CD4-positive, alpha-beta memory T cell (primary cell): ENCODE measurements at regions of chr12 and their contacts with region 1.

Region 1: DNA sequence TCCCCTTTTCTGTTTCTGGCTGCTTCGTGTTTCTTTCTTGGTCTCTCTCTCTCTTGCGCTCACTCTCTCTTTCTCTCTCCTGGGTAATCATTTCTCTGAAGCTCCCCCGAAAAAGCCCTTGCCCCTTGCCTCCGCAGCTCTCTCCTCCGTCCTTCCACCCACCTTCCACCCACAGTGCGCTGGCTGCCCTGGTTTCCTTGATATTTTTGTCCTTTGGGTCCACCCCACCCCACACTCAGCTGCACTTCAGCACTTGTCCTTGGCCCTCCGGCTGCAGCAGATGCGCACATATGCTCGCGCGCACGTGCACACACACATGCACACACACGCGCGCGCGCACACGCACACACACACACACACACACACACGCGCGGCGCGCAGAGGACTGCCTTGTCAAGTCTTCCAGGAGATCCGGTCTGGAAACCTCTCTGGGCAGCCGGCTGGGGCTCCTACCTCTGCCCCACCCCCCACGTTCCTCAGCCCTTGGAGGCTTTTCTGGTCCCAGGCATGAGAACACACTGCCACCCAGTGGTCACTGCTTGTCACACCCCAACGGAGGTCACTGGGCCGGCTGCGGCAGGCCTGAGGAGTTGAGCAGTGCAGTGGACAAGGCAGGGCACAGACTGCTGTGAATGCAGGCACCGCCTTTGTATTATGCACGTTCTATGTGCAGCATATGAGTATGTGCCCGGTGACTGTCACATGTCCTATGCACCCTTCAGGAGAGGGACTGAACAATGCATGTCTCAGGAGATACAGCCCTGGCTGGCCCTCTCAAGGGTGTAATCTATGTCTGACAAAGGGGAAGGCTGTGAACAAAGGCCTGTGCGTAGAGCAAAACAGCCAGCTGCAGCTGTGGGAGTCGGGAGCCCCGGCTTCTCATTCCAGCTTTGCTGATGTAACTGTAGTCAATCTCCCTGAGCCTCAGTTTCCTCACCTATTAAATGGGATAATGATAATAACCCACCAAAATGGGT is 6.5 kb downstream of the LAG3 start:
- DNase-seq: peak; percentile 84 to 90 (median 84)
- H3K4me3 ChIP-seq: peak overlapping the region in 1 of 2 donors; percentile 58
- H3K4me3 Mint-ChIP-seq: peak overlapping the region; percentile 67 to 97 (median 86)
- H3K27ac ChIP-seq: peak overlapping the region; percentile 6
- H3K27ac Mint-ChIP-seq: peak overlapping the region; percentile 49 to 98 (median 90)
- H3K4me1 ChIP-seq: peaks cover 28% of the 10 kb centered on the region
- H3K4me1 Mint-ChIP-seq: peaks cover 22 to 66% (median 45%) of the 10 kb centered on the region in 4 donors
- H3K27me3 ChIP-seq: peaks cover 6% of the 10 kb centered on the region
- H3K27me3 Mint-ChIP-seq: peaks cover 6 to 21% of the 10 kb centered on the region in 2 donors

Region 2: DNA sequence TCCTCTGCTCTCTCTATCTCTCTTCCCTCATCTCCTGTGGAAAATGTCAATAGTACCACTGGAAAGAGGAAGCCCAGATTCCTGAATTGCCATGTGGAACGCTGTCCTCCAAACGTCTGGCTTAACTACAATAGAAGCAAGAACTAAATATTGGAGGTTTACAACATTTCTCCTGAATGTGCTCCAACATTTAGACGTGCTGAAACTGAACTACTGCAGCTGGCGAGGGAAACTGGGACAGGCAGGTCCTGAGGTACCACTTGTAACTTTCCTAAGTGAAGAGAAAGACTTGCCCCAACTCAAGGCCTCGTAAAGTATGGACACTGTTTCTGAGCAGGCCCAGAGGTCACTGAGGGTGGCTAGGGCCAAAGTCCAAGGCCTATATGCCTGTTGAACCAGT is 1159.2 kb before region 1 on chr12:
- CTCF ChIA-PET with region 1: no interaction called
- POLR2A ChIA-PET with region 1: no interaction called
- intact Hi-C with region 1: no loop called
- DNase-seq: no peak
- H3K4me3 ChIP-seq: no peak overlapping the region
- H3K4me3 Mint-ChIP-seq: no peak overlapping the region
- H3K27ac ChIP-seq: no peak overlapping the region
- H3K27ac Mint-ChIP-seq: no peak overlapping the region
- H3K4me1 ChIP-seq: no peaks in the 10 kb centered on the region
- H3K4me1 Mint-ChIP-seq: no peaks in the 10 kb centered on the region
- H3K27me3 ChIP-seq: no peaks in the 10 kb centered on the region
- H3K27me3 Mint-ChIP-seq: peaks cover 2 to 7% of the 10 kb centered on the region in 2 donors

Region 3: DNA sequence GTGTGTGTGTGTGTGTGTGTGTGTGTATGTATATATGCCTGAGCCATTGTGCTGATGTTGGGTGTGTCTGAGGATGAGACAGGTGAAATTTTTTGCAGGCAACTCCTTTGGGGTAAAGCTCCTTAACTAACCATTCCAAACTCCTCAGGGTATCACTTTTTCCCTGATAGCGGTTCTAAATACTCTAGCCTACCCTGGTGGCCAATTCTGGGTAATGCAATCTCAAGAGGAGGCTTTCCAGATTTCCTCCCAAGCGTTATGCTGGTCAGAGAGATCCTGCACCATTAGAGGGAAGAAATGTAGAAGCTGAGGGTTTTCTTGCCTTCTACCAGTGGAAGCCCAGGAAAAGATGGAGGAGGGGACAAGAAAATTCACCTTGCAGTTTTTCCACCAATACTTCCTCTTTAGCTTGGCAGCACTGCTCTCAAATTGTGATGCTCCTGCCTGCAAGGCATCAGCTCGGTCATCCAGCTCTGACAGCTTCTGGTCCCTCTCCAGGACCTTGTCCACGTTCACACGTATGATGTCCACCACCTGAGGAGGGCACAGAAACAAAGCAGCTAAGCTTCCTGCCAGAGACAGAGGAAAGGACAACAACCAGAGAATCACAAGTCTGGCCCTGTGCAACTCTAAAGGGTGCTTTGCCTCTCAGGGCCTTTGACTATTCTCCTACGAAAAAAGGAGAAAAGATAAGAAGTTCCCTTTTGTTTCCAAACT is 313.2 kb before region 1 on chr12:
- CTCF ChIA-PET with region 1: no interaction called
- POLR2A ChIA-PET with region 1: no interaction called
- intact Hi-C with region 1: no loop called
- DNase-seq: peak; percentile 56 to 67 (median 59)
- H3K4me3 ChIP-seq: no peak overlapping the region
- H3K4me3 Mint-ChIP-seq: peak overlapping the region; percentile 26 to 79 (median 66)
- H3K27ac ChIP-seq: peak overlapping the region; percentile 10
- H3K27ac Mint-ChIP-seq: peak overlapping the region; percentile 90 to 97 (median 95)
- H3K4me1 ChIP-seq: peaks cover 88% of the 10 kb centered on the region
- H3K4me1 Mint-ChIP-seq: peaks cover 74 to 92% (median 87%) of the 10 kb centered on the region in 4 donors
- H3K27me3 ChIP-seq: no peaks in the 10 kb centered on the region
- H3K27me3 Mint-ChIP-seq: no peaks in the 10 kb centered on the region

Region 4: DNA sequence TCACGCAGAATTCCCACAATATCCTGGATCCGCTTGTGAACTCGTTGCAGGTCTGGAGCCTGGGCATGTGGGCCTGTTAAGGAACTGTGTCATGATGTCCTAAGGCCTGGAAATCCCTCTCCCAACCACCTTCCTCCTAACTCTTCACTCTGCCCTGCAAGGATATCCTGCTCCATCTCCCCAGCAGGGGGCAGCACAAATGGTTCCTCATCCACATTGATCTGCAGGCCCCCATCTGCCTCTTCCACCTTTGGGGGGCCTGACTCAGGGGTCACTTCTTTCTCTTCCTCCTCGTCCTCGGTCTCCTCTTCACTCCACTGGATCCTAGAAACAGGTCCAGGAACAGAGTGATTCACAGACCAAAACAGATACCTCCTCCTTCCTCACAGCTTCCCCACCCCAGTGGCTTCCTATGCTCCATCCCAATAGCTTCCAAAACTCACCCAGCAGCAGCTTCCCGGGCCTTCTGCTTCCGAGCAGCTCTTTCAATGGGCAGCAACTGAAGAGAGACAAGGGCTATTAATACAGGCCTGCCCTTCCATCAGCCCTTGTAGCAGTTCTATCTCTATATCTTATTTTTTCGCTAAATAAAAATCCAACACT is 215.3 kb before region 1 on chr12:
- CTCF ChIA-PET with region 1: interaction called, 4 read pairs
- POLR2A ChIA-PET with region 1: interaction called, 3 read pairs
- intact Hi-C with region 1: loop called (anchors 2 kb)
- DNase-seq: peak; percentile 55 to 62 (median 58)
- H3K4me3 ChIP-seq: no peak overlapping the region
- H3K4me3 Mint-ChIP-seq: peak overlapping the region in 1 of 8 donors; percentile 57
- H3K27ac ChIP-seq: no peak overlapping the region
- H3K27ac Mint-ChIP-seq: peak overlapping the region in 6 of 7 donors; percentile 57 to 90 (median 68)
- H3K4me1 ChIP-seq: peaks cover 33% of the 10 kb centered on the region
- H3K4me1 Mint-ChIP-seq: peaks cover 19 to 48% (median 36%) of the 10 kb centered on the region in 4 donors
- H3K27me3 ChIP-seq: no peaks in the 10 kb centered on the region
- H3K27me3 Mint-ChIP-seq: no peaks in the 10 kb centered on the region

Region 5: GRCh38 chr12:6613776-6614512 is 164.9 kb before region 1 on chr12:
- CTCF ChIA-PET with region 1: interaction called, 6 read pairs
- POLR2A ChIA-PET with region 1: interaction called, 3 read pairs
- intact Hi-C with region 1: loop called (anchors 1 kb)
- DNase-seq: peak in 4 of 5 donors; percentile 42 to 60 (median 53)
- H3K4me3 ChIP-seq: no peak overlapping the region
- H3K4me3 Mint-ChIP-seq: peak overlapping the region in 1 of 8 donors; percentile 67
- H3K27ac ChIP-seq: no peak overlapping the region
- H3K27ac Mint-ChIP-seq: peak overlapping the region; percentile 26 to 93 (median 85)
- H3K4me1 ChIP-seq: peaks cover 31% of the 10 kb centered on the region
- H3K4me1 Mint-ChIP-seq: peaks cover 23 to 50% (median 34%) of the 10 kb centered on the region in 4 donors
- H3K27me3 ChIP-seq: no peaks in the 10 kb centered on the region
- H3K27me3 Mint-ChIP-seq: no peaks in the 10 kb centered on the region

Region 6: GRCh38 chr12:6735448-6736191 is 43.2 kb before region 1 on chr12:
- CTCF ChIA-PET with region 1: interaction called, 4 read pairs
- POLR2A ChIA-PET with region 1: no interaction called
- intact Hi-C with region 1: loop called (anchors 1 kb)
- DNase-seq: peak in 4 of 5 donors; percentile 19 to 32 (median 26)
- H3K4me3 ChIP-seq: no peak overlapping the region
- H3K4me3 Mint-ChIP-seq: no peak overlapping the region
- H3K27ac ChIP-seq: no peak overlapping the region
- H3K27ac Mint-ChIP-seq: peak overlapping the region in 1 of 7 donors; percentile 16
- H3K4me1 ChIP-seq: no peaks in the 10 kb centered on the region
- H3K4me1 Mint-ChIP-seq: no peaks in the 10 kb centered on the region
- H3K27me3 ChIP-seq: no peaks in the 10 kb centered on the region
- H3K27me3 Mint-ChIP-seq: no peaks in the 10 kb centered on the region

Region 7: DNA sequence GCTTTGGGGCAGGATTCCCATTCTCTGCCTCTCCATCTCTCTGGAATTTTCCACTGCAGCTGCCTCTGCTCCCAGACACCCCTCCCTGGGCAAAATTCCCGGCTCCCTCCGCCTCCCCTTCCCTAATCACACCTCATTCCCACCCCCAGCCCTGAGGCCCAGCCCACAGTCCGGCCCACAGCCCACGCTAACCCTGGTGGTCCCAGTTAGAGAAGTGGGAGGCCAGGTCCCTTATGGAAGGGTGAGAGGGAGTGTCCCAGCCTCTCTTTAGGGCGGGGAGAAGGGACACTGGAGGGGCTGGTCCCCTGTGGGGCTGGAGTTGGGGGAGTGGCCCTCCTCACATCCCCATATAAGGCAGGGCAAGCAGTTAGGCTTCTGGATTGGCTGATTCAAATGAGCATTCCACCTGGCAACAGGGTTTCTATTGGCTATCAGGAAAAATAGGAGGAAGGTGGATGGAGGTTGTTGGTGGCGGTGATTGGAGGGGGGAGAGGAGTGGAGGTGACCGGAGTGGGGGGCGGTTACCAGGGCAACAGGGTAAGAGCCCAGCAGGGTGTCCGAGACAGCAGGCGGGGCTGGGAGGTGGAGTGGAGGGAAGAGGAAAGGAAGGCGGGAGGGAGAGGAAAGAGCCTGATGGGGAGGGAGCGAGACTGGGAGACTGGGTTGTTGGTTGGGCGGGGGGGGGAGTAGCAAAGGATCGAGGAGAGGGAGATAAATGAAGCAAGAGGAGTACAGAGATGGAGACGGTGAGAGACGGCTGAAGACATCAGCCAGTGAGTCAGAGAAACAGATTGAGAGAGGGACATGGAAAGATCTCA is 14.6 kb before region 1 on chr12:
- CTCF ChIA-PET with region 1: interaction called, 343 read pairs
- POLR2A ChIA-PET with region 1: interaction called, 22 read pairs
- intact Hi-C with region 1: no loop called
- DNase-seq: peak; percentile 47 to 79 (median 56)
- H3K4me3 ChIP-seq: no peak overlapping the region
- H3K4me3 Mint-ChIP-seq: peak overlapping the region; percentile 3 to 72 (median 62)
- H3K27ac ChIP-seq: no peak overlapping the region
- H3K27ac Mint-ChIP-seq: peak overlapping the region in 2 of 7 donors; percentile 31 to 46
- H3K4me1 ChIP-seq: peaks cover 27% of the 10 kb centered on the region
- H3K4me1 Mint-ChIP-seq: peaks cover 15 to 40% (median 28%) of the 10 kb centered on the region in 4 donors
- H3K27me3 ChIP-seq: peaks cover 15% of the 10 kb centered on the region
- H3K27me3 Mint-ChIP-seq: peaks cover 16 to 25% of the 10 kb centered on the region in 2 donors